IMR-90 (cell line): ENCODE measurements at regions of chr22 and their contacts with region 1.

Region 1: GRCh38 chr22:42214633-42215415 is 55.6 kb downstream of the TCF20 start:
- DNase-seq: no peak
- ATAC-seq: no peak
- H3K4me3 ChIP-seq: no peak overlapping the region
- H3K27ac ChIP-seq: no peak overlapping the region
- H3K4me1 ChIP-seq: peaks cover 9% of the 10 kb centered on the region
- H3K27me3 ChIP-seq: no peaks in the 10 kb centered on the region
- CTCF ChIP-seq: no peak
- POLR2A ChIP-seq: no peak
- RAD21 ChIP-seq: no peak

Region 2: DNA sequence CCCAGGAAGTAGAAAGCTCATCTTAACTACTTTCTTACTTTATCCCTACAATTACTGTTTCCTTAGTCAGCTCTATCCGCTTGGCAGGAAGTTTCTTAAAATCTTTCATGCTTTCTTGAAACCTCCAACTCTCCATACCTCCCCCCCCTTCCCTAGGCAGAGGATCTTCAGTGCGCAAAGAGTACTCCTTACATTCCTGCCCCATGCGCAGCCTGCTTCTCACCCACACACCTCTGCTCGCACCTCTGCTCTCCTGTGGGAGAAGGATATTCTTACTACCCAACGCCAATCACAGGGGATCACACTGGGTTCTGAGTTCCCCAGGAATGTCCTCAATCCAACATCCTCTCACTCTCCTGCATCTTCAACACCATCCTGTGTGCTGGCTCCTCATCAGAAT is 43.3 kb after region 1 on chr22:
- CTCF ChIA-PET with region 1: no interaction called
- POLR2A ChIA-PET with region 1: no interaction called
- dilution Hi-C with region 1: no loop called
- in situ Hi-C with region 1: no loop called
- intact Hi-C with region 1: loop called (anchors 5 kb)
- DNase-seq: no peak
- ATAC-seq: no peak
- H3K4me3 ChIP-seq: no peak overlapping the region
- H3K27ac ChIP-seq: no peak overlapping the region
- H3K4me1 ChIP-seq: peaks cover 13% of the 10 kb centered on the region
- H3K27me3 ChIP-seq: no peaks in the 10 kb centered on the region
- CTCF ChIP-seq: no peak
- POLR2A ChIP-seq: no peak
- RAD21 ChIP-seq: no peak

Region 3: GRCh38 chr22:42473484-42474193 is 258.8 kb after region 1 on chr22:
- CTCF ChIA-PET with region 1: no interaction called
- POLR2A ChIA-PET with region 1: interaction called, 11 read pairs
- dilution Hi-C with region 1: no loop called
- in situ Hi-C with region 1: no loop called
- intact Hi-C with region 1: no loop called
- DNase-seq: peak; percentile 63
- ATAC-seq: peak; percentile 82
- H3K4me3 ChIP-seq: no peak overlapping the region
- H3K27ac ChIP-seq: no peak overlapping the region
- H3K4me1 ChIP-seq: no peaks in the 10 kb centered on the region
- H3K27me3 ChIP-seq: peaks cover 22% of the 10 kb centered on the region
- CTCF ChIP-seq: peak; percentile 66
- POLR2A ChIP-seq: no peak
- RAD21 ChIP-seq: peak; percentile 59